ENCODE measurements at regions of chr15 and their contacts with region 1.

Region 1: DNA sequence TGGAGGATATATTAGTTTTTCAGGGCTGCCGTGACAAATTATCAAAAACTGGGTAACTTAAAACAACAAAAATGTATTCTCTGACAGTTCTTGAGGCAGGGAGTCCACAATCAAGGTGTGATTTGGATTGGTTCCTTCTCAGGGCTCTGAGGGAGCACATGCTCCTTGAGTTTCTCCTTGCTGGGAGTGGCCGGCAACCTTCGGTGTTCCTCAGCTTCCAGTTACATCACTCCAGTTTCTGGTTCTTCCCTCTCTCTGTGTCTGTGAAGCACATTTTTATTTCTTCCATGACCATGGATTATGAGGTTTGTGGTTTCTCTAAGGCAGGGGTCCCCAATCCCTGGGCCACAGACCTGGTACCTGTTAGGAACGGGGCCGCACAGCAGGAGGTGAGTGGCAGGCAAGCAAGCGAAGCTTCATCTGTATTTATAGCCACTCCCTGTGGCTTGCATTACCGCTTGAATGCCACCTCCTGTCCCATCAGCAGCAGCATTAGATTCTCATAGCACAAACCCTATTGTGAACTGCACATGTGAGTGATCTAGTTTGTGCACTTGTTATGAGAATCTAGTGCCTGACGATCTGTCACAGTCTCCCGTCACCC is 24.3 kb downstream of the LRRC28 start:
- DNase-seq: no peak
- H3K4me3 ChIP-seq: no peak overlapping the region
- H3K27ac ChIP-seq: no peak overlapping the region
- H3K4me1 ChIP-seq: peaks cover 0 to 14% (median 0%) of the 10 kb centered on the region in 4 donors
- H3K27me3 ChIP-seq: no peaks in the 10 kb centered on the region
- CTCF ChIP-seq: no peak

Region 2: GRCh38 chr15:99712415-99712814 is 436.8 kb after region 1 on chr15:
- intact Hi-C with region 1: loop called (anchors 5 kb)
- DNase-seq: no peak
- H3K4me3 ChIP-seq: no peak overlapping the region
- H3K27ac ChIP-seq: peak overlapping the region; percentile 8 to 29
- H3K4me1 ChIP-seq: peaks cover 0 to 50% (median 35%) of the 10 kb centered on the region in 4 donors
- H3K27me3 ChIP-seq: no peaks in the 10 kb centered on the region
- CTCF ChIP-seq: no peak

Region 3: GRCh38 chr15:99755692-99756409 is 480.2 kb after region 1 on chr15:
- intact Hi-C with region 1: loop called (anchors 5 kb)
- DNase-seq: no peak
- H3K4me3 ChIP-seq: no peak overlapping the region
- H3K27ac ChIP-seq: no peak overlapping the region
- H3K4me1 ChIP-seq: no peaks in the 10 kb centered on the region
- H3K27me3 ChIP-seq: no peaks in the 10 kb centered on the region
- CTCF ChIP-seq: peak; percentile 77 to 86